ENCODE measurements at regions of chr11 and their contacts with region 1.

Region 1: GRCh38 chr11:86938900-86939880 is 16.0 kb downstream of the FZD4 start:
- DNase-seq: no peak
- ATAC-seq: no peak
- H3K4me3 Mint-ChIP-seq: no peak overlapping the region
- H3K27ac Mint-ChIP-seq: no peak overlapping the region
- H3K4me1 Mint-ChIP-seq: no peaks in the 10 kb centered on the region
- H3K27me3 Mint-ChIP-seq: no peaks in the 10 kb centered on the region
- CTCF ChIP-seq: no peak

Region 2: GRCh38 chr11:86861810-86862209 is 77.4 kb before region 1 on chr11:
- CTCF ChIA-PET with region 1: no interaction called
- POLR2A ChIA-PET with region 1: no interaction called
- intact Hi-C with region 1: no loop called
- DNase-seq: no peak
- ATAC-seq: no peak
- H3K4me3 Mint-ChIP-seq: no peak overlapping the region
- H3K27ac Mint-ChIP-seq: no peak overlapping the region
- H3K4me1 Mint-ChIP-seq: no peaks in the 10 kb centered on the region
- H3K27me3 Mint-ChIP-seq: peaks cover 13% of the 10 kb centered on the region
- CTCF ChIP-seq: no peak

Region 3: GRCh38 chr11:86978756-86979608 is 39.8 kb after region 1 on chr11:
- CTCF ChIA-PET with region 1: interaction called, 4 read pairs
- POLR2A ChIA-PET with region 1: no interaction called
- intact Hi-C with region 1: loop called (anchors 1 kb)
- DNase-seq: no peak
- ATAC-seq: no peak
- H3K4me3 Mint-ChIP-seq: no peak overlapping the region
- H3K27ac Mint-ChIP-seq: no peak overlapping the region
- H3K4me1 Mint-ChIP-seq: no peaks in the 10 kb centered on the region
- H3K27me3 Mint-ChIP-seq: peaks cover 5% of the 10 kb centered on the region
- CTCF ChIP-seq: no peak

Region 4: GRCh38 chr11:87352759-87353707 is 413.8 kb after region 1 on chr11:
- CTCF ChIA-PET with region 1: no interaction called
- POLR2A ChIA-PET with region 1: no interaction called
- intact Hi-C with region 1: loop called (anchors 1 kb)
- DNase-seq: peak; percentile 75
- ATAC-seq: peak; percentile 95
- H3K4me3 Mint-ChIP-seq: no peak overlapping the region
- H3K27ac Mint-ChIP-seq: no peak overlapping the region
- H3K4me1 Mint-ChIP-seq: peaks cover 14% of the 10 kb centered on the region
- H3K27me3 Mint-ChIP-seq: no peaks in the 10 kb centered on the region
- CTCF ChIP-seq: peak; percentile 88

Region 5: GRCh38 chr11:87463486-87464102 is 524.4 kb after region 1 on chr11:
- CTCF ChIA-PET with region 1: no interaction called
- POLR2A ChIA-PET with region 1: no interaction called
- intact Hi-C with region 1: no loop called
- DNase-seq: no peak
- ATAC-seq: no peak
- H3K4me3 Mint-ChIP-seq: no peak overlapping the region
- H3K27ac Mint-ChIP-seq: no peak overlapping the region
- H3K4me1 Mint-ChIP-seq: no peaks in the 10 kb centered on the region
- H3K27me3 Mint-ChIP-seq: no peaks in the 10 kb centered on the region
- CTCF ChIP-seq: no peak